Mammary epithelial cell (primary cell): ENCODE measurements at regions of chr3 and their contacts with region 1.

Region 1: GRCh38 chr3:138594150-138594934 is at the start of gene CEP70:
- DNase-seq: peak; percentile 95
- H3K4me3 ChIP-seq: peak within 1 kb of the TSS; percentile 70 to 84 (median 79)
- H3K27ac ChIP-seq: peak within 1 kb of the TSS; percentile 86
- H3K4me1 ChIP-seq: peaks cover 3% of the 10 kb centered on the region
- H3K27me3 ChIP-seq: no peaks in the 10 kb centered on the region
- CTCF ChIP-seq: peak; percentile 75 to 93
- total RNA-seq, gene CEP70: 18.7 to 19.5 TPM

Region 2: DNA sequence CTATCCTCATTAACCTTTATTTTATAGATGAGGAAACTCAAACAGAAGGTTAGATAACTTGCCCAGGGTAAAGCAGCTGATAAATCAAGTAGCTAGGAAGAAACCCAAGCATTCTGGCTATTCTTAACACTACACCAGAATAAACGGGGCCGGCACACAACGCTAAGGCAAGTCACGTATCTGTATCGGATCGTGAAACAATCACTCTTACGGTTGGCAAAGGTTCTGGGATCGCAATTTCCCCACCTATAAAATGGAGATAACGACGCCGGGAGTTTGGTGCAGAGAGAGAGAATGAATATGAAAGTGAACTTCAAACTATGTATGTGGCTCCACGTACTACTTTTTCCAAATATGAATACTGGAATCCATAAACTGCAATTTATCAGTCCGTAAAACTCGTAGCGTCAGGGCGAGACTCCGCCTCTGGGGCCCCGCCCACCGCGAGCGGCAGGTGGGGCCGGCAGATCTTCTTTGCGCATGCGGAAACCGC is 407.5 kb before region 1 on chr3:
- CTCF ChIA-PET with region 1: no interaction called
- dilution Hi-C with region 1: no loop called
- in situ Hi-C with region 1: no loop called
- intact Hi-C with region 1: loop called (anchors 10 kb)
- DNase-seq: peak; percentile 84
- H3K4me3 ChIP-seq: peak overlapping the region; percentile 74 to 93 (median 78)
- H3K27ac ChIP-seq: peak overlapping the region; percentile 80
- H3K4me1 ChIP-seq: peaks cover 12% of the 10 kb centered on the region
- H3K27me3 ChIP-seq: no peaks in the 10 kb centered on the region
- CTCF ChIP-seq: no peak

Region 3: DNA sequence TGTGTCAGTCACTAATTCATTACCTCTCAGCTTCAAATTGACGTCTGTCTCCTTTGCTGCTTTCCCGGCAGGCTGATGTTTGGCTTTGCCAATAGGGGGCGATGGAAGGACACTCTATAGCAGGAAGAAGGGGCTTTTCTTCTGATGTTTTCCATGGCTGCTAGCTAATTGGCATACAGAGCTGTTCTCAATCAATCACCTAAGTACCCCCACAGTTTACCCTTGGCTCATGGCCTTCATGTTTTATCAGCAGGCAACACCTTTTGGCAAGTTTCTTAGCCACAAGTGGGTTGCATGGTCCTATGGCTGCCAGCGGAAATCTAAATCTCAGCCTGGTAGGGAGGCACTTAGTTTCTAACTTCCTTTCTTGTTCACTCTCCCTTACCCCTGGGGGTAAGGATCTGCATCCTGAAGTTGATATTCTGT is 114.9 kb before region 1 on chr3:
- CTCF ChIA-PET with region 1: interaction called, 11 read pairs
- dilution Hi-C with region 1: no loop called
- in situ Hi-C with region 1: no loop called
- intact Hi-C with region 1: loop called (anchors 1 kb)
- DNase-seq: peak; percentile 15
- H3K4me3 ChIP-seq: no peak overlapping the region
- H3K27ac ChIP-seq: no peak overlapping the region
- H3K4me1 ChIP-seq: no peaks in the 10 kb centered on the region
- H3K27me3 ChIP-seq: no peaks in the 10 kb centered on the region
- CTCF ChIP-seq: peak; percentile 86 to 97

Region 4: DNA sequence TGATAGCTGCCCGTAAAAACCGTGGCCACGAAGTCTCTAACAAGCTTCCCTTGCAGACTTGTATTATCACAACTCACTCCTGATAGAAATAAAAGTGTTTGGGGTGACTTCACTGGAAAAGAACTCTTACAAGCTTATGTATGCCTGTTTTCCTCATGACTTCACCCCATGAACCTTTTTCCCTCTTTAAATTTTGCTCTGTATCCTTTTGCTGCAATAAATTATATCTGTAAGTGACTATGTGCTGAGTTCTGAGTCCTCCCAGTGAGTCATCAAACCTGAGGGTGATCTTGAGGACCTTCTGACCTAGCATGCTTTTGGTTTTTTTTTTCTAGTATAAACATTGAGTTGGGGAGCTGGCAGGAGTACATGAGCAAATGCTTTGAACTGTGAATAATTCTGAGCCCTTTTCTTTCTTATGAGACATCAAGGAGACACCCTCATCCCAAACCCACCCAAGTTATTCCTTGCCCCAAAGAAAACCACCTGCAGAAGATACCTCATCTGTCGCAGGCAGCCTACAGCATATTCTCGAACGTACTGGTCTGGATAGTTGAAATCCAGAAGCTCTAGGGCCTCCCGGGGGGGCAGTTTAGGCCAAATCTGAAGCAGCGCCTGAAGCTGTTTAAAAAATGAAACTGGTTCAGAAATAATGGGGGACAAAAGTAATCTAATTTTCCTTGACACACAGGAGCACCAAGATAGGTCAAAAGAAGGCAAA is 100.1 kb after region 1 on chr3:
- CTCF ChIA-PET with region 1: no interaction called
- dilution Hi-C with region 1: no loop called
- in situ Hi-C with region 1: no loop called
- intact Hi-C with region 1: loop called (anchors 2 kb)
- DNase-seq: peak; percentile 88
- H3K4me3 ChIP-seq: no peak overlapping the region
- H3K27ac ChIP-seq: no peak overlapping the region
- H3K4me1 ChIP-seq: peaks cover 10% of the 10 kb centered on the region
- H3K27me3 ChIP-seq: no peaks in the 10 kb centered on the region
- CTCF ChIP-seq: no peak

Region 5: GRCh38 chr3:138834359-138835212 is 240.2 kb after region 1 on chr3 and contains the start of gene PIK3CB:
- CTCF ChIA-PET with region 1: no interaction called
- dilution Hi-C with region 1: no loop called
- in situ Hi-C with region 1: no loop called
- intact Hi-C with region 1: loop called (anchors 2 kb)
- DNase-seq: peak; percentile 86
- H3K4me3 ChIP-seq: peak within 1 kb of the TSS; percentile 77 to 83 (median 81)
- H3K27ac ChIP-seq: peak within 1 kb of the TSS; percentile 75
- H3K4me1 ChIP-seq: peaks cover 9% of the 10 kb centered on the region
- H3K27me3 ChIP-seq: no peaks in the 10 kb centered on the region
- CTCF ChIP-seq: peak; percentile 11 to 46
- total RNA-seq, gene PIK3CB: 14.5 to 27.2 TPM

Region 6: GRCh38 chr3:138923531-138923994 is 329.2 kb after region 1 on chr3:
- CTCF ChIA-PET with region 1: no interaction called
- dilution Hi-C with region 1: no loop called
- in situ Hi-C with region 1: loop called (anchors 5 to 10 kb)
- intact Hi-C with region 1: loop called (anchors 1 kb)
- DNase-seq: peak; percentile 78
- H3K4me3 ChIP-seq: no peak overlapping the region
- H3K27ac ChIP-seq: no peak overlapping the region
- H3K4me1 ChIP-seq: peaks cover 16% of the 10 kb centered on the region
- H3K27me3 ChIP-seq: no peaks in the 10 kb centered on the region
- CTCF ChIP-seq: peak; percentile 94 to 98

Region 7: DNA sequence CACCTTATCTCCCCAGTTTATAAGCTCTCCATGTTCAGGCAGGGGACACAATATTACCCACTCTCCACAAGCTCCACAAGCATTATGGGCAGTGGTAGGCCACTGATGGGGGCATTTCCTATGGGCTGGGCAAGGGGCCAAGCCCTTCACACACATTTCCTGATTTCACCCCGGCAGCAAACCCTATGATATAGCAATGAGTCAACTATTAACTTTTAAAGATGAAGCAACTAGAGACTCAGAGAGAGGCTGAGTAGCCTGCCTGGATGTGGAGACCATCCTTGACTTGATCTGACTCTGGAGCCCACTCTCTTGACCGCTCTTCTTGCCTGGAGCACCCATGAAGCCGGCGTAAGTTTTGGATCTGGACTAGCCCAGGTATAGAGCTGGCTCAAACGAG is 380.1 kb after region 1 on chr3:
- CTCF ChIA-PET with region 1: no interaction called
- dilution Hi-C with region 1: no loop called
- in situ Hi-C with region 1: no loop called
- intact Hi-C with region 1: loop called (anchors 2 kb)
- DNase-seq: peak; percentile 34
- H3K4me3 ChIP-seq: no peak overlapping the region
- H3K27ac ChIP-seq: no peak overlapping the region
- H3K4me1 ChIP-seq: no peaks in the 10 kb centered on the region
- H3K27me3 ChIP-seq: no peaks in the 10 kb centered on the region
- CTCF ChIP-seq: no peak